ENCODE measurements at regions of chr1 and their contacts with region 1.

Region 1: DNA sequence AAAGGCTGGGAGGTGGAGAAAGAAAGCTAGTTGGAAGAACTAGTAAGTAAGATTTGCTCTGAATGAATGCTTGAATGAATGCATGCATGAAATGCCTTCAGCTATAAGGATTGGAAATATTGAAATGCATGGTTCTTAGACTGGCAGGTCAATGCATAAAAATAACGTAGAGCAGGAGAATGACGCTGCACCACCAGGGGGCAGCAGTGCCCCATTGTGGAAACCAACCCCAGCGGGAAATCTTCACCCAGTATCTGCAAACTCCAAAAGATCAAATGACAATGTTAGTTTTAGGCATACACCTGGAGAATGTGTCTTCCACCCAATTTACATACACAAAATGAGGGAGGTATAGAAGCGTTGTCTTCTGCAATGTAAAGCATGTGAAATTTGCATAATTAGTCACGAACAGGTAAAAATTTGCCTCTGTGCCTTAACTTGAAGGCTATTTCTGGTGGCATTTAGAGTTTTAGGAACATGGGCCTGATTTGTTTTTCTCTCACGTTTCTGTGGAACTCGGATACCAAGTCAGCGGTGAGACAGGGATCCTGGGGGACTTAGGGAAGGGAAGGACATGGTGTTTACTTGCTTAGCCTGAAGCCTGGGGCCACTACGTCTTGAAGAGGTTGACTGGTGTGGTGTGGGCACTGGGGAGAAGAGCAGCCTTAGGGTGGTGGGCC is 78.6 kb downstream of the HHAT start:
- DNase-seq: no peak
- ATAC-seq: peak; percentile 89
- H3K4me3 ChIP-seq: no peak overlapping the region
- H3K27ac ChIP-seq: no peak overlapping the region
- H3K4me1 ChIP-seq: no peaks in the 10 kb centered on the region
- H3K27me3 ChIP-seq: no peaks in the 10 kb centered on the region
- CTCF ChIP-seq: peak; percentile 87 to 98 (median 93); a peak in 5 of 6 replicates
- EP300 ChIP-seq: no peak
- POLR2A ChIP-seq: no peak
- RAD21 ChIP-seq: peak; percentile 72

Region 2: GRCh38 chr1:210342986-210343780 is 64.2 kb before region 1 on chr1:
- CTCF ChIA-PET with region 1: interaction called, 17 read pairs
- POLR2A ChIA-PET with region 1: interaction called, 10 read pairs
- RAD21 ChIA-PET with region 1: interaction called, 13 read pairs
- SMC1A ChIA-PET with region 1: interaction called, 35 read pairs
- in situ Hi-C with region 1: no loop called
- intact Hi-C with region 1: no loop called
- DNase-seq: peak; percentile 72
- ATAC-seq: peak; percentile 75
- H3K4me3 ChIP-seq: peak overlapping the region; percentile 59
- H3K27ac ChIP-seq: peak overlapping the region; percentile 53
- H3K4me1 ChIP-seq: peaks cover 23% of the 10 kb centered on the region
- H3K27me3 ChIP-seq: no peaks in the 10 kb centered on the region
- CTCF ChIP-seq: no peak
- EP300 ChIP-seq: peak; percentile 70; a peak in 2 of 4 replicates
- POLR2A ChIP-seq: no peak
- RAD21 ChIP-seq: no peak

Region 3: DNA sequence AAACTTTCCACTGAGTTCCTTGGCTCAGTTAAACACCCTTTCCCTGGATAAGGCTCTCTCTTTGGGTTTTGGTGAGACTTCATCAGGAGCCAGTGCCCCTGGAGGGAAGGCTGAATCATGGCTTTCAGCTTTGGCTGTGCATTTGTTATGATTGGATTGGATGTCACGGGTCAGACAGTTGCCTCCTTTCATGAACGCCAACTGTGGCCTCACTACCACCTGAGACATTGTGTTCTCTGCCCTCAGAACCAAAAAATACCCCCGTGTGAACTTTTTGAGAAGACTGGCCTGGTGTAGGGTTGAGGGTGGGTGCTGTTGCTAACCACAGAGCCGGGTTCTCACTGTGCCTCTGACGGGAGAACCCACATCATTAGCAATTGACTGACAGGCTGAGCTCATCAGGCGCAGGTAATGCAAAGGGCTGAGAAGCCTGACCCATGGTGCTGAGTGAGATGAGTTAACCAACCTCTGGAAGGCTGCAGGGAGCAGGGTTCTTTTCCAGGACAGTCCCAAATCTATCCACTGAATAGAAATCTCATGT is 13.0 kb before region 1 on chr1:
- CTCF ChIA-PET with region 1: interaction called, 37 read pairs
- POLR2A ChIA-PET with region 1: interaction called, 16 read pairs
- RAD21 ChIA-PET with region 1: interaction called, 41 read pairs
- SMC1A ChIA-PET with region 1: interaction called, 28 read pairs
- in situ Hi-C with region 1: no loop called
- intact Hi-C with region 1: no loop called
- DNase-seq: peak; percentile 80
- ATAC-seq: peak; percentile 80
- H3K4me3 ChIP-seq: no peak overlapping the region
- H3K27ac ChIP-seq: no peak overlapping the region
- H3K4me1 ChIP-seq: no peaks in the 10 kb centered on the region
- H3K27me3 ChIP-seq: no peaks in the 10 kb centered on the region
- CTCF ChIP-seq: no peak
- EP300 ChIP-seq: peak; percentile 85 to 87; a peak in 3 of 4 replicates
- POLR2A ChIP-seq: no peak
- RAD21 ChIP-seq: no peak

Region 4: GRCh38 chr1:210448297-210448892 is 41.0 kb after region 1 on chr1:
- CTCF ChIA-PET with region 1: interaction called, 53 read pairs
- POLR2A ChIA-PET with region 1: interaction called, 5 read pairs
- RAD21 ChIA-PET with region 1: interaction called, 17 read pairs
- SMC1A ChIA-PET with region 1: interaction called, 42 read pairs
- in situ Hi-C with region 1: no loop called
- intact Hi-C with region 1: loop called (anchors 2 kb)
- DNase-seq: no peak
- ATAC-seq: peak; percentile 81
- H3K4me3 ChIP-seq: no peak overlapping the region
- H3K27ac ChIP-seq: no peak overlapping the region
- H3K4me1 ChIP-seq: no peaks in the 10 kb centered on the region
- H3K27me3 ChIP-seq: no peaks in the 10 kb centered on the region
- CTCF ChIP-seq: peak; percentile 49 to 59 (median 54)
- EP300 ChIP-seq: no peak
- POLR2A ChIP-seq: no peak
- RAD21 ChIP-seq: peak; percentile 60

Region 5: GRCh38 chr1:210951279-210951678 is 543.9 kb after region 1 on chr1:
- CTCF ChIA-PET with region 1: interaction called, 8 read pairs
- POLR2A ChIA-PET with region 1: no interaction called
- RAD21 ChIA-PET with region 1: interaction called, 5 read pairs
- SMC1A ChIA-PET with region 1: no interaction called
- in situ Hi-C with region 1: no loop called
- intact Hi-C with region 1: loop called (anchors 5 kb)
- DNase-seq: no peak
- ATAC-seq: no peak
- H3K4me3 ChIP-seq: no peak overlapping the region
- H3K27ac ChIP-seq: no peak overlapping the region
- H3K4me1 ChIP-seq: no peaks in the 10 kb centered on the region
- H3K27me3 ChIP-seq: no peaks in the 10 kb centered on the region
- CTCF ChIP-seq: no peak
- EP300 ChIP-seq: no peak
- POLR2A ChIP-seq: no peak
- RAD21 ChIP-seq: no peak